Activated CD4-positive, alpha-beta memory T cell treated with anti-CD3 and anti-CD28 coated beads for 36 hours (primary cell): ENCODE measurements at regions of chr6 and their contacts with region 1.

Region 1: GRCh38 chr6:144284783-144285547 is at the start of gene UTRN:
- DNase-seq: peak; percentile 61
- H3K4me3 Mint-ChIP-seq: peak within 1 kb of the TSS; percentile 90
- H3K27ac Mint-ChIP-seq: peak within 1 kb of the TSS; percentile 73
- H3K4me1 Mint-ChIP-seq: peaks cover 16% of the 10 kb centered on the region
- H3K27me3 Mint-ChIP-seq: peaks cover 10% of the 10 kb centered on the region
- total RNA-seq, gene UTRN: 37.8 to 38.1 TPM

Region 2: DNA sequence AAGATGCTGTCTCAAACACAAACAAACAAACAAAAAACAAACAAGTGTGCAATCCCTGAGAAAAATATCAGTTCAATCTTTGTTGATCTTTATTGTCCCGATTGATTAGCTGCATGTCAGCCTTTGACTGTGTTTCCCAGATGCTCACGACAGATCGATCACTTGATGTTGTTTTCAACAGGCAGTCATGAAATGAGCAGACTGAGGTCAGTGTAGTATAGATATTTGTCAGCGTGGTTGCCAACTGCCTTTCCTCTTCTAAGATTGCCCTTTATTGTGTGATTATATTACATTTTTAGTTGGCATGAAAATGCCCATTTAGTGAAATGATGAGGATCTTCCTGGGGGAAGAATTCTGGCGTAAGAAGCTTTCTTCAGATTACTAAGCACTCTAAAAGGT is 25.8 kb after region 1 on chr6:
- CTCF ChIA-PET with region 1: no interaction called
- POLR2A ChIA-PET with region 1: interaction called, 3 read pairs
- intact Hi-C with region 1: loop called (anchors 2 kb)
- DNase-seq: peak; percentile 62
- H3K4me3 Mint-ChIP-seq: peak overlapping the region; percentile 31
- H3K27ac Mint-ChIP-seq: no peak overlapping the region
- H3K4me1 Mint-ChIP-seq: peaks cover 25% of the 10 kb centered on the region
- H3K27me3 Mint-ChIP-seq: peaks cover 2% of the 10 kb centered on the region

Region 3: GRCh38 chr6:144395014-144395413 is 110.0 kb after region 1 on chr6:
- CTCF ChIA-PET with region 1: no interaction called
- POLR2A ChIA-PET with region 1: no interaction called
- intact Hi-C with region 1: loop called (anchors 1 kb)
- DNase-seq: no peak
- H3K4me3 Mint-ChIP-seq: no peak overlapping the region
- H3K27ac Mint-ChIP-seq: no peak overlapping the region
- H3K4me1 Mint-ChIP-seq: peaks cover 39% of the 10 kb centered on the region
- H3K27me3 Mint-ChIP-seq: no peaks in the 10 kb centered on the region

Region 4: GRCh38 chr6:144469144-144469575 is 184.2 kb after region 1 on chr6:
- CTCF ChIA-PET with region 1: interaction called, 3 read pairs
- POLR2A ChIA-PET with region 1: no interaction called
- intact Hi-C with region 1: loop called (anchors 5 kb)
- DNase-seq: peak; percentile 46
- H3K4me3 Mint-ChIP-seq: peak overlapping the region; percentile 59
- H3K27ac Mint-ChIP-seq: peak overlapping the region; percentile 49
- H3K4me1 Mint-ChIP-seq: peaks cover 31% of the 10 kb centered on the region
- H3K27me3 Mint-ChIP-seq: no peaks in the 10 kb centered on the region